Left lung (tissue), 14 donors: ENCODE measurements at regions of chr6 and their contacts with region 1.

Region 1: DNA sequence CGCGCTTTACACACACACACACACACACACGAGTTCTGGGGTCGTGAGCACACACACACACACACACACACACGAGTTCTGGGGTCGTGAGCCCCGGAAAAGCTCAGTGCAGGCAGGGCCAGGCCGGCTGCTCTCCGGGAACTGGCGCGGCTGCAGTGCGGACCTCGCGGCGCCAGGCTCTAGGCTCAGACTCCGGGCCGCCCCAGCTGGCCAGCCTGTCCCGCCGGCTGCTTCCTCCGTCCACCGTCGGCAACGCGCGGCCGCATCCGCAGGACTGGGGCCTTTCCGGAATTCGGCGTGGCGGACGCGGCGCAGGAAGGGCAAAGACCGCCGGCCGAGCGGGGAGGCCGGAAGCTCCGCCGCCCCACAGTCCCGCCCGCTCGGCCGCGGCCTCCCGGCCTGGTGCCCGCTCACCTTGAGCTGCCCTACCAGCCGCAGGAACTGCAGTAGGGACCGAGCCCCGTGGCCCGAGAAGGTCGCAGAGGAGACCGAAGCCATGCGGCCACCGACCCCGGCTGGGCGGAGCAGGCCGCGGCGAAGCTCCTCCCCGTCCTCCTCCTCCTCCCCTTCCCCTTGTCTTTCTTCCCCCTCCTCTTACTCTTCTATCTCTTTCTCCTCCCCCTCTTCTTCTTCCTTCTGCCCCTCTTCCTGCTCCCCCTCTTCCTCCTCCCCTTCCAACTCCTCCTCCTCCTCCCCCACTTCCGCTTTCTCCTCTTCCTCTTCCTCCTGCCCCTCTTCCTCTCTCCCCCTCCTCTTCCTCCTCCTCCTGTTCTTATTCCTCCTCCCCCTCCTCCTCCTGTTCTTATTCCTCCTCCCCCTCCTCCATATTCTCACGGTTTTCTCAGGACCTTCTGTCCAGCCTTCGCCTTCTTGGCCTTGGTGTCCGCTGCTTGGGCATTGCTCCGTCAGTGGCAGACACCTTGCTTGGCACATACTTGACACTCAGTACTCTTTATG is at the start of gene HDDC2:
- DNase-seq: peak; percentile 69 to 96 (median 74)
- ATAC-seq: peak; percentile 91
- H3K4me3 ChIP-seq: peak within 1 kb of the TSS; percentile 64 to 66
- H3K27ac ChIP-seq: peak within 1 kb of the TSS; percentile 83 to 96
- H3K4me1 ChIP-seq: peaks cover 10 to 21% of the 10 kb centered on the region in 2 donors
- H3K27me3 ChIP-seq: no peaks in the 10 kb centered on the region
- CTCF ChIP-seq: no peak
- polyA plus RNA-seq, gene HDDC2: 78.7 to 86.9 (median 81.1) TPM

Region 2: DNA sequence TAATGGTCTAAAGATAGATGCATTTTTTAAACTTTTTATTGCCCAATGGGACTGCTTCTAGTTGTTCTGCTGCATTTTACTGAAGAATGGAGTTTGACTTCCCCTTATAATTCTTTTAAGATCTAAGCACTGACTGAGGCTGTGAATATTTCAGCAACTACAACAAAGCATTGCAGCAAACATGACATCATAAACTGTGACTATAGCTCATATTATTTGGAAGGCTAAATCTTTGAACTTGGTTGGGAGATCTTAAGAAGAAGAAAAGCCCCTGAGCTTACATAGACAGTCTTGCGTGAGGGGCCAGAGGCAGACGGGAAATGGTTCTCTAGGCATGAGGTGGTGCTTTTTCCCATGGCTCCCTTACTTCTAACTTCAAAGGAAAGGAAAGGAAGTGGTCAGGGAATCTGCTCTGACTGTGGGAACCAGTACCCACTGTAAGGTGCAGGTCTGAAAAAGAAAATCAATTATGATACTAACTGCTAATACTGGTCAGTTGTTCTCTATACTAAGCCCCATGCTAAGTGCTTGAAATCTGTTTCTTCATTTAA is 462.5 kb after region 1 on chr6:
- intact Hi-C with region 1: loop called in 1 of 2 experiments (anchors 10 kb)
- DNase-seq: no peak
- ATAC-seq: no peak
- H3K4me3 ChIP-seq: no peak overlapping the region
- H3K27ac ChIP-seq: no peak overlapping the region
- H3K4me1 ChIP-seq: no peaks in the 10 kb centered on the region
- H3K27me3 ChIP-seq: peaks cover 0 to 41% of the 10 kb centered on the region in 2 donors
- CTCF ChIP-seq: no peak